ENCODE measurements at regions of chr2 and their contacts with region 1.

Region 1: GRCh38 chr2:237731663-237732062 is 66.9 kb upstream of the RBM44 start:
- DNase-seq: no peak
- ATAC-seq: peak in 6 of 8 donors; percentile 20 to 62 (median 32)
- H3K4me3 ChIP-seq: peak overlapping the region in 1 of 10 donors; percentile 23
- H3K27ac ChIP-seq: peak overlapping the region in 9 of 10 donors; percentile 61 to 93 (median 83)
- H3K4me1 ChIP-seq: peaks cover 23 to 100% (median 95%) of the 10 kb centered on the region in 9 donors
- H3K27me3 ChIP-seq: no peaks in the 10 kb centered on the region
- CTCF ChIP-seq: no peak

Region 2: DNA sequence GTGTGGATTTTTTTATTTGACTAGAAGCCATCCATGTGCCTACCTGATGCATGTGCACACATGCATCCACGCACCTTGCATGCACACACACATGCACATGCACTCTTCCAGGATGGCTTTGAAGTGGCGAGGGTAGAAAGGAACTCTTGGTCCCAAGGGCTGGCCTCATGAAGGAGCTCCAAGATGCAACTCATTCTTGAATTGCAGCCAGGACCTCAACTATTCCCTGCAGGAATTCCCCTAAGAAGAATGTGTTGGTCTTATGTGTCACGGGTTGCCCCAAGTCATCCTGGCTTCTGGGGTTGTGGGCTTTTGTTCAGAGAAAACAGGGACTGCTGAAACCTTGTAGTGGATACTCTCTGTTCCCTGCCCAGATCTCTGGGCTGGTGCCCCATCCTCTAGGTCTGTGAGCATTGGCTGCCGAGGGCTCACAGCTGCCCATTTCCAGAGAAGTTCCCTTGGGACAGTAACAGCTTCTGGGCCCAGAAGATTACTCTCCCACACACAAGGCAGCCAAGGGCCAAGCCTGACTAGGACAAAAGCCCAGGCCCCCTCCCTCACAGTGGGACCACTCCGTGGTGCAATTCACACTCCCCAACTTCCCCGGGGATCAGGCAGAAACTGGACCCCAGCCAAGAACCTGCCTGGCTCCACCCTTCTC is 508.3 kb before region 1 on chr2:
- intact Hi-C with region 1: no loop called
- DNase-seq: peak in 1 of 2 donors; percentile 67
- ATAC-seq: peak; percentile 24 to 85 (median 53)
- H3K4me3 ChIP-seq: no peak overlapping the region
- H3K27ac ChIP-seq: peak overlapping the region in 8 of 10 donors; percentile 14 to 81 (median 42)
- H3K4me1 ChIP-seq: peaks cover 4 to 27% (median 14%) of the 10 kb centered on the region in 9 donors
- H3K27me3 ChIP-seq: peaks cover 0 to 3% (median 0%) of the 10 kb centered on the region in 7 donors
- CTCF ChIP-seq: no peak

Region 3: DNA sequence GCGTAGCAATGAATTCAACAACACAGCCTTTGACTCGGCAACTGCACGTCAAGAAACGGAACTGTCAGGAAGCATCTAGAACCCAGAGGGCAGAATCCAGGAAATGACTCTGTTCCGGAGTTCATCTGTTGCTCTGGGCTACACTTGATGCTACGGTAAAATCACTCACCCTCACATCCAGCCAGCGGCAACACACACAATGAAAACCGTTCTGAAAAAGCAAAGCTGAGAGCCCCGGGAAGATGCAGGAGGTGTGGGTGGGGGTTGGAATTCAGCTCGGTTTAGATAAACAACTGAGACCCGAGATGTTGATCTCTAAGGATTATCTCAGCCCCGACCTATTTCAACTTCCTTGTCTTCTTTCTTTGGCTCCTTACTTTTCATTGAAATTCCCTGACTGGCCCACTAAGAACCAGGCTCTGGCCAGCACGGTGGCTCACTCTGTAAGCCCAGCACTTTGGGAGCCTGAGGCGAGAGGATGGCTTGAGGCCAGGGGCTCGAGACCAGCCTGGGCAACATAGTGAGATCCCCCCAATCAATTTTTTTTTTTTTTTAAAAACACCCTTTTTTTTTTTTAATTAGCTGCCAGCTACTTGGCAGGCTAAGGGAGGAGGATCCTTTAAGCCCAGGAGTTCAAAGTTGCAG is 127.8 kb before region 1 on chr2:
- intact Hi-C with region 1: loop called in 1 of 10 experiments (anchors 5 kb)
- DNase-seq: peak in 1 of 2 donors; percentile 64
- ATAC-seq: peak in 7 of 8 donors; percentile 34 to 81 (median 57)
- H3K4me3 ChIP-seq: no peak overlapping the region
- H3K27ac ChIP-seq: peak overlapping the region in 6 of 10 donors; percentile 9 to 62 (median 48)
- H3K4me1 ChIP-seq: peaks cover 6 to 50% (median 37%) of the 10 kb centered on the region in 9 donors
- H3K27me3 ChIP-seq: no peaks in the 10 kb centered on the region
- CTCF ChIP-seq: no peak

Region 4: GRCh38 chr2:237691908-237692600 is 39.6 kb before region 1 on chr2:
- intact Hi-C with region 1: loop called in 9 of 10 experiments (anchors 2 to 5 kb)
- DNase-seq: peak; percentile 96 to 98
- ATAC-seq: peak; percentile 70 to 83 (median 80)
- H3K4me3 ChIP-seq: peak overlapping the region; percentile 71 to 97 (median 87)
- H3K27ac ChIP-seq: peak overlapping the region; percentile 82 to 98 (median 95)
- H3K4me1 ChIP-seq: peaks cover 15 to 93% (median 87%) of the 10 kb centered on the region in 9 donors
- H3K27me3 ChIP-seq: no peaks in the 10 kb centered on the region
- CTCF ChIP-seq: peak in 1 of 9 donors; percentile 12

Measured in heart right ventricle (tissue), 16 donors.